Endothelial cell of umbilical vein (primary cell): ENCODE measurements at regions of chr1 and their contacts with region 1.

Region 1: GRCh38 chr1:3618881-3619671 is 5.7 kb upstream of the TPRG1L start:
- DNase-seq: peak; percentile 80
- H3K4me3 ChIP-seq: no peak overlapping the region
- H3K27ac ChIP-seq: peak overlapping the region; percentile 47
- H3K4me1 ChIP-seq: peaks cover 25% of the 10 kb centered on the region
- H3K27me3 ChIP-seq: no peaks in the 10 kb centered on the region
- CTCF ChIP-seq: peak; percentile 78
- POLR2A ChIP-seq: no peak

Region 2: GRCh38 chr1:3471302-3472087 is 147.6 kb before region 1 on chr1:
- CTCF ChIA-PET with region 1: interaction called, 17 read pairs
- POLR2A ChIA-PET with region 1: no interaction called
- dilution Hi-C with region 1: no loop called
- intact Hi-C with region 1: no loop called
- DNase-seq: peak; percentile 35
- H3K4me3 ChIP-seq: no peak overlapping the region
- H3K27ac ChIP-seq: no peak overlapping the region
- H3K4me1 ChIP-seq: peaks cover 4% of the 10 kb centered on the region
- H3K27me3 ChIP-seq: no peaks in the 10 kb centered on the region
- CTCF ChIP-seq: peak; percentile 16 to 47
- POLR2A ChIP-seq: no peak

Region 3: DNA sequence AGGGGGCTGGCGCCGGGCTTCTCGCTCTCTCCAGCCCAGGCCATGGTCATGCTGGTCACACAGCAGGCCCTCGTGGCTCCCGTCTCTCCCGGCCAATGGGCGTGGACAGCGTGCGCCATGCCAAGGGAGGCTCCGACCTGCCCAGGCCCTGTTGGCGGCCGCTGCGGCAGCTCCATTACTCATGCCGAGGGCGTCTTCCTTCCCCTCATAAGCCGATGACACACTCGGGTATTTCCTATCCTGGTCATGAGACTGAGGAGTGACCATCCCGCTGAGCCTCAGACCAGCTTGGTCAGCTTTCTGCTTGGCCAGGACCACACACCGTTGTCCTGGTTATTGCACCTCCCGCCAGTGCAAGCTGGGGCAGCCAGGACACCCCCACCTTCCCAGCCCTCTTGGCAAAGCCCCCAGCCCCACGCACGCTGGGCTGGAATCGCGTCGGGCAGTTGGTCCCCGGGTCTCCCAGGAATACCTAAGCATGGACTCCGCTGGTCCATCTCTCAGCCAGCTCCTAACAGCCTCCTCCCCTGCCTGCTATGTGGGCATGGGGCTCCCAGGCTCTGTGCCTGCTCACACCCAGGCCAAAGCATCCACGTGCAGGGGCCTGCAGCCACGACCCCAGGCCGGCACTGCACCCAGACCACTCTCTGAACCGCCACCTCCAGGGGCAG is 114.8 kb before region 1 on chr1:
- CTCF ChIA-PET with region 1: interaction called, 26 read pairs
- POLR2A ChIA-PET with region 1: no interaction called
- dilution Hi-C with region 1: no loop called
- intact Hi-C with region 1: loop called (anchors 1 kb)
- DNase-seq: peak; percentile 94
- H3K4me3 ChIP-seq: no peak overlapping the region
- H3K27ac ChIP-seq: peak overlapping the region; percentile 90
- H3K4me1 ChIP-seq: peaks cover 10% of the 10 kb centered on the region
- H3K27me3 ChIP-seq: no peaks in the 10 kb centered on the region
- CTCF ChIP-seq: no peak
- POLR2A ChIP-seq: no peak

Region 4: DNA sequence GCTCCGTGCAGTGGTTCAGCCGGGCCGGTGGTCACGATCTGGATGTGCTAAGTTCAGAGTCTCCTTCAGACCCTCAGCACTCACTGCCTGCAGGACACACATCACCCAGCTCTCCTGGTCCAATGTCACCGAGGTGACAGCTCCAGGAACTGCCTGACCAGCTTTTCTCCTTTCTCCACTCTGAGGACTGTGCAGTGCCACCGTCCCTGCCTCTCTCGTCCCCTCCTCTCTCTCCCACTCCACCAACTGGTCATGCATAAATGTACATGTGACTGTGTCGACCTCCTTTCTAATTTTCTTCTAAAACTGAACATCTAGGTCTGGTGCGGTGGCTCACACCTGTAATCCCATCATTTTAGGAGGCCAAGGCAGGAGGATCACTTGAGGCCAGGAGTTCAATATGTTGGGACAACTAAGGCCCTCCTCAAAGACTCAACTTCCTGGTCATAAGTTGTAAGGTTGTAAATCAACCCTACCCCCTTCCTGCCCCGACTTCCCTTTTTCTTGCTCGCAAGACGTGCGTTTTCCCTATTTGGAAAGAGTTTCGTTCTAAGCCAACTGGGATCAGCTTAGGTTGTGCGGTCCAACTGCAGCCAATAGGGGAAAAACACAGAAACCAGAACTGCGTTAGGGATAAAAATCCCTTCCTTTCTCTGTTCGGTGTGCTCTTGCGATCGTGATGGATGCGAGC is 60.9 kb before region 1 on chr1:
- CTCF ChIA-PET with region 1: interaction called, 196 read pairs
- POLR2A ChIA-PET with region 1: no interaction called
- dilution Hi-C with region 1: no loop called
- intact Hi-C with region 1: no loop called
- DNase-seq: no peak
- H3K4me3 ChIP-seq: no peak overlapping the region
- H3K27ac ChIP-seq: no peak overlapping the region
- H3K4me1 ChIP-seq: no peaks in the 10 kb centered on the region
- H3K27me3 ChIP-seq: no peaks in the 10 kb centered on the region
- CTCF ChIP-seq: no peak
- POLR2A ChIP-seq: no peak

Region 5: GRCh38 chr1:3598051-3598491 is 21.0 kb before region 1 on chr1:
- CTCF ChIA-PET with region 1: interaction called, 17 read pairs
- POLR2A ChIA-PET with region 1: no interaction called
- dilution Hi-C with region 1: no loop called
- intact Hi-C with region 1: no loop called
- DNase-seq: peak; percentile 19
- H3K4me3 ChIP-seq: no peak overlapping the region
- H3K27ac ChIP-seq: no peak overlapping the region
- H3K4me1 ChIP-seq: peaks cover 9% of the 10 kb centered on the region
- H3K27me3 ChIP-seq: no peaks in the 10 kb centered on the region
- CTCF ChIP-seq: no peak
- POLR2A ChIP-seq: no peak